ENCODE measurements at regions of chr15 and their contacts with region 1.

Region 1: DNA sequence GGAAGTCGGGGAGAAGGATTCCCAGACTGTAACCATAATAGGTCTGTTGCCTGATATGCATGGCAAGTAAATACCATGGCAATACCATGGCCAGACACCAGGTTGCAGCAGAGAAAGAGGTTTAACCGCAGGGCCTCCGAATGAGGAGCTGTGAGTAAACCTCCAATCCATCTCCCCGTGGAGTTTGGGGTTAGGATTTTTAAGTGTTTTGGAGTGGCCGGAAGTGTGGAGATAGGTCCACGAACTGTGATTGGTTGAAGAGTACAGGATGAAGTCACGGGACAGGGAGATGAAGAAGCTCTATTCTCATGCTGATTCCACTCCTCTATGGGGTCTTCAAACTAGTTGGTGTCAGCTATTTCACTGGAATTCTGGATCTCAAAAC is 127.9 kb downstream of the ST8SIA2 start:
- DNase-seq: peak in 4 of 5 donors; percentile 75 to 86 (median 80)
- ATAC-seq: peak; percentile 72 to 96 (median 95)
- H3K4me3 ChIP-seq: no peak overlapping the region
- H3K27ac ChIP-seq: no peak overlapping the region
- H3K4me1 ChIP-seq: peaks cover 0 to 8% (median 0%) of the 10 kb centered on the region in 12 donors
- H3K27me3 ChIP-seq: no peaks in the 10 kb centered on the region
- CTCF ChIP-seq: peak; percentile 57 to 93 (median 83)
- POLR2A ChIP-seq: no peak

Region 2: DNA sequence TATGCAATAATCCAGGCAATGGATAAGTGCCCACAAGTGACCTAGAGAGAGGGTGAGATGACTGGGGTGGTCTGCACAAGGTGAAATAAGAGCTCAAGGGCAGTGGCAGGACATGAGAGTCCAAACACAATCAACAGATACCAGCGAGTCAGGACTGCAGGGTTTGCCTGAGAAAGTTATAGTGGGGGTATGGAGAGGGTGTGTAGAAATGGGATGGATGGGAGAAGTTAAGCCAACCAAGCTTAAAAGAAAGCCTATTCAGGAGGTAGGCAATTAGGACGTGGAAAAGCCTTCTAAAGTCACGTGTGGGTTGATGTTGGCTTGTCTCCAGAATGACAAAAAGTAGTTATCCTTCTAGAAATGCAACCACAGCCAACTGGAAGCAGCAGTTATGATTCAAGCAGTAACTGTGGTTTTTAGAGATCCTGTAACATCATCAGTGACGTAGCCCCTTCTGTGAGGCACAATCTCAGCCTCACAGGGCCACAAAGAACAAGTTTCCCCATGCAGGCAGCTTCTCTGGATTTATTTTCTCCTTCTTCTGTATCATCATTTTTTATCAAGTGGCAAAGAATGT is 77.9 kb after region 1 on chr15:
- intact Hi-C with region 1: loop called in 6 of 10 experiments (anchors 5 to 10 kb)
- DNase-seq: no peak
- ATAC-seq: no peak
- H3K4me3 ChIP-seq: no peak overlapping the region
- H3K27ac ChIP-seq: no peak overlapping the region
- H3K4me1 ChIP-seq: peaks cover 0 to 69% (median 0%) of the 10 kb centered on the region in 12 donors
- H3K27me3 ChIP-seq: no peaks in the 10 kb centered on the region
- CTCF ChIP-seq: no peak
- POLR2A ChIP-seq: no peak

Region 3: DNA sequence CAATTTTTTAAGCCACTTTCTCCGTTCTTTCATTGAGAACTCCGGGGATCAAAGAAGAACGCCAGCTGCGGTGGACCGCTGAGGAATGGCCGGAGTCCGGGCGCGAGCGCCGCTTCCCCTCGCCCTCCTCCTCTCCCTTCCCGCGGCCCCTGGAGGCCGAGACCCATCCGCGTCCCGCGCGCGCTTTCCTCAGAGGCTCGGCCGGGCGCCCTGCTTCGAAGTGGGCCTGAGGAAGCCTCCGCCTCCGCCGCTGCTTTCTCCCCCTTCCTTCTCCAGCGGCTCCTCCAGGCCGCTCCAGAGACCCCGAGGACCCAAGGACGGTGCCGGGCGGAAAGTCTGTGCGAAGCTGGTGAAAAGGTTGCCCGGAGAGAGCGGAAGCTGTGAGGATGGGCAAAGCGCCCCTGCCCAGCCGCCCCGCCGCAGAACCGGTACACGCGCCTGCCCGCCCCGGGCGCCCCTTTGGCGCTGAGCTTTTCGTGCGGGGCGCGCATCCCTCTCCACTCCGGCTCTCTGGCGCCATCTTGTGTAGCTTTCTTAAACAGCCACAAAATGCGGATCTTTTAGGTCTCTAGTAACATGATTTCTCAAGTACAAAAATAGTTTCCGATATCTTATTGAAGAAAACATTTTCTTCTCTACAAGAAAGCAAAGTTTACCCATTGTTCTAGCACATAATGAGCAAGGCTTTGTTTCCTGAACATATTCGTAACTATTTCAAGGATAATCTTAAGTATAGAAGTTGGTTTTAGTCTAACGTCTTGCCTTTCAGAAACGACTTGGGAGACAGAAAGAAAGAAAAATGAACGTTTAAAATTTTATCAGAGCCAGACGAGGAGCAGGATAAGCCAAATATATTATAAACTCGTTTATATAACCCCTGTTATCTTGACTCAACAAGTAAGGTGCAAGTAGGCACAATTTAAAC is 193.1 kb after region 1 on chr15:
- intact Hi-C with region 1: loop called (anchors 1 to 5 kb)
- DNase-seq: peak; percentile 69 to 78 (median 75)
- ATAC-seq: peak; percentile 73 to 92 (median 88)
- H3K4me3 ChIP-seq: peak overlapping the region; percentile 33 to 74 (median 62)
- H3K27ac ChIP-seq: peak overlapping the region; percentile 17 to 86 (median 59)
- H3K4me1 ChIP-seq: peaks cover 0 to 9% (median 4%) of the 10 kb centered on the region in 12 donors
- H3K27me3 ChIP-seq: peaks cover 0 to 5% (median 0%) of the 10 kb centered on the region in 9 donors
- CTCF ChIP-seq: peak; percentile 78 to 97 (median 90)
- POLR2A ChIP-seq: no peak

Measured in heart left ventricle (tissue), 16 donors.